ENCODE measurements at regions of chr15 and their contacts with region 1.

Region 1: DNA sequence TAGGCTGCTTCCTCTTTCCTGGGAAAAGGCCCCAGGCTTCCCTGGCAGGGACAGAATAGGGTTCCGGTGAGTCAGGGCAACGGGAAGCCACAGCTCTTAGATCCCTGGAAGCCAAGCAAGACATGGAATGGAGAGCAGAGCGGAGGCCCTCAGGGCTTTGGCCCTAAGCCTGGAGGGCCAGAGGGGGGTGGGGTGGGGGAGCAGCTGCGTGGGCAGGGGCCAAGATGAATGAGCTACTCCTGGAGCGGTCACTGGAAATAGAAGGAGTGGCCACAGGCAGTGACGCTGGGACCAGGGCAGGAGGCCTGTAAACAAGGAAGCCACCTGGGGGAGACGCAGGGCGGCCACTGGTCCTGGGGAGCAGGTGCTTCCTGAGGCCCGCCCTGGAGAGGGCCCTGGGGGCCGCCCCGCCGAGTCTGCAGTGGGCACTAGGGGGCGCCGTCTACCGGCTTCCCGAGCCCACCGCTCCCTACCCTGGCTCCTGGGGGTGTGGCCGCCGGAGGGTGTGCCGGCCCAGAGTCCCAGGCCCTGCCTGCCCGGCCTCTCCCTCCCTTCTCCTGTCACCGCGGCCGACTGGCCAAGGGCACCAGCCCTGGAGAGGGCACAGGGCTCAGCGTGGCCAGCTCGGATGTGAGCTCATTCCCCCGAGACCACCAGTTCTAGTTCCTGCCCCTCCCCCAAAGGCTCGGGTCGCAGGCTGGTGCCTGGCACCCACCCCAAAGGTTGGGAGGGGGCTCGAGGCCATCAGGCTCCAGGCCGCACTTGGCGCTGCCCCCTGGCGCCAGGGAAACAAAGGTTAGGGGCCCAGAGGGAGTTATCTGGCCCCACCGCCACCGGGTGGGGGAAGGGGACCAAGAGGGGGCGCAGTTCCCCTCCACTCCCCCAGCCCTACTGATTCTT is 12.1 kb downstream of the VPS18 start:
- DNase-seq: peak; percentile 96
- H3K4me3 ChIP-seq: peak overlapping the region; percentile 36 to 52 (median 40)
- H3K27ac ChIP-seq: peak overlapping the region; percentile 88 to 97 (median 91)
- H3K4me1 ChIP-seq: peaks cover 25 to 89% (median 61%) of the 10 kb centered on the region in 4 donors
- H3K27me3 ChIP-seq: no peaks in the 10 kb centered on the region
- CTCF ChIP-seq: peak in 6 of 7 experiments; percentile 10 to 91 (median 77)
- EP300 ChIP-seq: no peak
- POLR2A ChIP-seq: no peak

Region 2: DNA sequence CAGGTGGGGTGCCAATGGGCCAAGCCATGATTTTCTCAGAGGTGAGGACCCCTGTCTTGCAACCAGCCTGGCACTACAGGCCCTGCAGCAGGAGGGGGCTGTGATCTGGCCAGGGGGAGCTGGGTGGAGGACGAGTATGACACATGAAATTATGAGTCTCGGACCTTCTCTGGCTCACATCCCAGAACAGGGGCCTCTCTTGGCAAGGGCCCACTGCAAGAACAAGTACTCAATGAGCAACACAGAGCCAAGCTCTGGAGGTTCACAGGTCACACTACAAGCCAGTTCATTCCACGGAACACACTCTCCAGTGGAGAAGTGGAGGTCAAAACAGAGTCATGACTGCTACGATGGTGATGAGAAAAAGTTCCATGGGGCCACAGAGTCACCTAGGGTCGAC is 369.8 kb before region 1 on chr15:
- intact Hi-C with region 1: no loop called
- DNase-seq: peak in 1 of 2 donors; percentile 77
- H3K4me3 ChIP-seq: no peak overlapping the region
- H3K27ac ChIP-seq: no peak overlapping the region
- H3K4me1 ChIP-seq: no peaks in the 10 kb centered on the region
- H3K27me3 ChIP-seq: no peaks in the 10 kb centered on the region
- CTCF ChIP-seq: no peak
- EP300 ChIP-seq: no peak
- POLR2A ChIP-seq: no peak

Region 3: GRCh38 chr15:41022487-41023090 is 116.2 kb after region 1 on chr15:
- intact Hi-C with region 1: loop called (anchors 5 kb)
- DNase-seq: peak; percentile 32 to 84
- H3K4me3 ChIP-seq: no peak overlapping the region
- H3K27ac ChIP-seq: peak overlapping the region in 1 of 5 donors; percentile 40
- H3K4me1 ChIP-seq: peaks cover 12 to 67% (median 41%) of the 10 kb centered on the region in 4 donors
- H3K27me3 ChIP-seq: no peaks in the 10 kb centered on the region
- CTCF ChIP-seq: peak in 4 of 7 experiments; percentile 26 to 62 (median 46)
- EP300 ChIP-seq: no peak
- POLR2A ChIP-seq: no peak

Region 4: GRCh38 chr15:41079717-41080116 is 173.4 kb after region 1 on chr15:
- intact Hi-C with region 1: no loop called
- DNase-seq: peak in 1 of 2 donors; percentile 3
- H3K4me3 ChIP-seq: no peak overlapping the region
- H3K27ac ChIP-seq: no peak overlapping the region
- H3K4me1 ChIP-seq: no peaks in the 10 kb centered on the region
- H3K27me3 ChIP-seq: no peaks in the 10 kb centered on the region
- CTCF ChIP-seq: no peak
- EP300 ChIP-seq: no peak
- POLR2A ChIP-seq: no peak

Region 5: DNA sequence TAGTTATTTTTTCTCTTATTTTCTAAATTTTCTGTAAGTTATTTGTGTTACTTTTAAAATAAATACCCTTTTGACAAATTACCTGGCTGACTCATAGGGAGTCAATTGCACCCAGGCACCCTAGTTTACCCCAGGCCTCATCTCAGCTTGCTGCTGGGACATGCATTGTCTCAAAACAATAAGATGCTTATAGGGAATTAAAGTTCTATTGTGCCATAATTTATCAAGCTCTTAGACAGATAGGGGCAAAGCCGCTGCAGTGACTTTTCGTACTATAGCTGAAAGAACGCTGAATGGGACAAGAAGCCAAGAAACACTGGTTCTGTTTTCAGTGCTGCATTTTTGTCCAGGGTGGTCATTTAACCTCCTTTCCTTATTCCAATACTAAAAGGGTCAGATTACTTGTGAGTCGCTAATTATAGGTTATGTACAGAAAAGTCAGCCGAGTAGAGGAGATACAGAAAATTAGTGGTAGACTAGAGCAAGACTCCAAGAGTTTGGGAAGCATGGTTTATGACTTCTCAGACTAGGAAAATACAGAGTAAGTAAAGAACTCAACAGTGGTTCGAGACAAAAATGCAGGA is 274.0 kb after region 1 on chr15:
- intact Hi-C with region 1: loop called (anchors 5 kb)
- DNase-seq: no peak
- H3K4me3 ChIP-seq: no peak overlapping the region
- H3K27ac ChIP-seq: no peak overlapping the region
- H3K4me1 ChIP-seq: no peaks in the 10 kb centered on the region
- H3K27me3 ChIP-seq: no peaks in the 10 kb centered on the region
- CTCF ChIP-seq: no peak
- EP300 ChIP-seq: no peak
- POLR2A ChIP-seq: no peak

Region 6: GRCh38 chr15:41337631-41338522 is 431.5 kb after region 1 on chr15:
- intact Hi-C with region 1: no loop called
- DNase-seq: no peak
- H3K4me3 ChIP-seq: no peak overlapping the region
- H3K27ac ChIP-seq: no peak overlapping the region
- H3K4me1 ChIP-seq: peaks cover 10 to 18% (median 10%) of the 10 kb centered on the region in 4 donors
- H3K27me3 ChIP-seq: no peaks in the 10 kb centered on the region
- CTCF ChIP-seq: no peak
- EP300 ChIP-seq: no peak
- POLR2A ChIP-seq: no peak

Measured in stomach (tissue), 19 donors.